ENCODE measurements at regions of chr17 and their contacts with region 1.

Region 1: GRCh38 chr17:79612468-79613194 is 1.8 kb upstream of the RBFOX3 start:
- DNase-seq: peak; percentile 92 to 94
- ATAC-seq: peak; percentile 67 to 89
- H3K4me3 ChIP-seq: no peak overlapping the region
- H3K27ac ChIP-seq: peak overlapping the region; percentile 88 to 95
- H3K4me1 ChIP-seq: peaks cover 37% of the 10 kb centered on the region
- CTCF ChIP-seq: peak; percentile 97
- EP300 ChIP-seq: no peak
- POLR2A ChIP-seq: no peak
- RAD21 ChIP-seq: peak; percentile 96 to 97

Region 2: GRCh38 chr17:79087428-79088143 is 525.0 kb before region 1 on chr17:
- CTCF ChIA-PET with region 1: interaction called, 28 read pairs
- POLR2A ChIA-PET with region 1: no interaction called
- DNase-seq: peak; percentile 68 to 96
- ATAC-seq: peak; percentile 70 to 90
- H3K4me3 ChIP-seq: no peak overlapping the region
- H3K27ac ChIP-seq: no peak overlapping the region
- H3K4me1 ChIP-seq: no peaks in the 10 kb centered on the region
- CTCF ChIP-seq: peak; percentile 95
- EP300 ChIP-seq: no peak
- POLR2A ChIP-seq: no peak
- RAD21 ChIP-seq: peak; percentile 88 to 89

Region 3: DNA sequence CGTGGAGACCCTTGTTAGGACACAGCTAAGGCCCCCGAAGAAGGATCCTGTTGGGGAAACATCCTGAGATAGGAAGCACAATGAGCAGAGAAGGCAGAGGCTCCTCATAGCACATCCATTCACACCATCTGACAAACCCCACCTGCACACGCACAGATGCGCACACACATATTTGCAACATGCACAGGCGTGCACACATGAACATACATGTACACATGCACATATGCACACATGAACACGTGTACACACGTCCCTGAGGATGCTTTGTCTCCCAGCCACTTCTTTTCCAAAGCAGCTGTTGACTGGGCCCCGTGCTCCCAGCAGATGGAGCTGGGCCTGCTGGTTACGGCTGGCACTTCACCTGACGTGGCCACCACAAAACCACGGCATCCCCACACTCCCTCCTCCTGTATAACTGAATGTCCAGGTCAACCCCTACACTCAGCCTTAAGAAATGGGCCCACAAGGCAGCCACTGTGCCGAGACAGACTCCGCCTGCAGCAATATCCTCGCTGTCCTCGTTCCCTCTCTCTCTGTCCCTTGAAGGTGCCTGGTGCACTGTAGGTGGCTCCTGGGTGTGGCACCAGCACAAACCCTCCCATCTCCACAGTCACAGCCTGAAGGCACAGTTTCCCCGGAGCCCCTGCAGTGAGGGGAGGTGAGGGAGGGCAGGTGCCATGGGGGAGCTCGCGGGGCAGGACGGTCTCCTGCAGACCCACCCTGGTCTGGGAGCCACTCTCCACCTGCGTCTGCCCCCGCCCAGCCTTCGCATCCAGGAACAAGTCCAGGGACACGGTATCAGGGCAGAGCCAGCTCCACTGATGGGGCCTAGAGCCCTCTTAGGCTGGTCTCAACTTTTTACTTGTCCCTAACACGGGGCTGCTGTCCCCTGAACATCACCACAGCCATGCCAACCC is 184.8 kb before region 1 on chr17:
- CTCF ChIA-PET with region 1: interaction called, 14 read pairs
- POLR2A ChIA-PET with region 1: no interaction called
- DNase-seq: peak in 1 of 2 experiments; percentile 44
- ATAC-seq: peak; percentile 4 to 20; a peak in 2 of 6 replicates
- H3K4me3 ChIP-seq: no peak overlapping the region
- H3K27ac ChIP-seq: peak overlapping the region; percentile 7 to 9; a peak in 3 of 6 replicates
- H3K4me1 ChIP-seq: peaks cover 35% of the 10 kb centered on the region
- CTCF ChIP-seq: no peak
- EP300 ChIP-seq: no peak
- POLR2A ChIP-seq: no peak
- RAD21 ChIP-seq: no peak

Region 4: GRCh38 chr17:79473111-79473875 is 139.3 kb before region 1 on chr17:
- CTCF ChIA-PET with region 1: interaction called, 16 read pairs
- POLR2A ChIA-PET with region 1: no interaction called
- DNase-seq: peak; percentile 99 to 100
- ATAC-seq: peak; percentile 94 to 95
- H3K4me3 ChIP-seq: no peak overlapping the region
- H3K27ac ChIP-seq: peak overlapping the region; percentile 95 to 97
- H3K4me1 ChIP-seq: peaks cover 57% of the 10 kb centered on the region
- CTCF ChIP-seq: no peak
- EP300 ChIP-seq: peak; percentile 100
- POLR2A ChIP-seq: no peak
- RAD21 ChIP-seq: peak in 1 of 2 experiments; percentile 71

Region 5: GRCh38 chr17:79543531-79543930 is 69.1 kb before region 1 on chr17:
- CTCF ChIA-PET with region 1: interaction called, 17 read pairs
- POLR2A ChIA-PET with region 1: no interaction called
- DNase-seq: no peak
- ATAC-seq: no peak
- H3K4me3 ChIP-seq: no peak overlapping the region
- H3K27ac ChIP-seq: peak overlapping the region in 1 of 2 experiments; percentile 28; a peak in 1 of 6 replicates
- H3K4me1 ChIP-seq: peaks cover 16% of the 10 kb centered on the region
- CTCF ChIP-seq: no peak
- EP300 ChIP-seq: no peak
- POLR2A ChIP-seq: no peak
- RAD21 ChIP-seq: no peak

Region 6: DNA sequence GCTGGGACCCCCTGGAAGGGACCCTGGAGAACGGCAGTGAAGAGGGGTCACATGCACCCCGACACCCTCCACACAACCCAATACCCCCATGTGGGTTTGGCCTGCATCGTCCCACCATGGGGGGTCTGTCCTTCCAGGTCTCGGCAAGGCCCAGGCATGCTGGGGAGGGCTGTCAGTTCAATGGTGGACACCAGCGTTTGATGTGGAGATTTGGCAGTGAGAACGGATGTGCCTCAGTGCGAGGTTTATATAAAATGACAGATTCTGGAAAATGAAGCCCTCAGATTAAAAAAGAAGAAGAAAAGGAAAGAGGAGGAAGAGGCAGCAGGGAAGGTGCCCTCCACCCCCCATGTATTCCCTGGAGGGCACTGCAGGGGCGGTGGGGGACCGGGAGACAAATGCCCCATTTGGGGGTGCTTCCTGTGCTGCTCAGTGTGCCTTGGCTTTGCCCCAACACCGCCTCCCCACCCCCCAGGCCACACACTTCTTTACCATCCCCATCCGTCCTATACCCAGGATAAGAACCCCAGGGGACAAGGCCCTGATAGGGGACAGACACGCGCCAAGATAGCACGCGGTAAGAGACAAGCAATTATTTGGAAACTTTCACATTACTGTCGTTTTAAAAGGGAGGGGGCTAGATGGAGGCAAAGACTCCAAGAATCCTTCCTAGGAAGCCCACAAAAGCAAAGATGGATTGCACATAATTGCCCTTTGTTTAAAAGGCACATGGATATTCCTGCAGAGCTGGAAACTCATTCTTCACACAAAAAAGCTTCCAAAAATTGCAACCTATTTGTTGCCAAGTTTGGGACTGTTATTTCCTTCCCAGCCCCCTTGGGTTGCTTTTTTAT is 22.7 kb before region 1 on chr17:
- CTCF ChIA-PET with region 1: interaction called, 26 read pairs
- POLR2A ChIA-PET with region 1: no interaction called
- DNase-seq: no peak
- ATAC-seq: no peak
- H3K4me3 ChIP-seq: no peak overlapping the region
- H3K27ac ChIP-seq: no peak overlapping the region
- H3K4me1 ChIP-seq: peaks cover 9% of the 10 kb centered on the region; the same call in 1 of the 3 replicates
- CTCF ChIP-seq: no peak
- EP300 ChIP-seq: no peak
- POLR2A ChIP-seq: no peak
- RAD21 ChIP-seq: no peak

Region 7: DNA sequence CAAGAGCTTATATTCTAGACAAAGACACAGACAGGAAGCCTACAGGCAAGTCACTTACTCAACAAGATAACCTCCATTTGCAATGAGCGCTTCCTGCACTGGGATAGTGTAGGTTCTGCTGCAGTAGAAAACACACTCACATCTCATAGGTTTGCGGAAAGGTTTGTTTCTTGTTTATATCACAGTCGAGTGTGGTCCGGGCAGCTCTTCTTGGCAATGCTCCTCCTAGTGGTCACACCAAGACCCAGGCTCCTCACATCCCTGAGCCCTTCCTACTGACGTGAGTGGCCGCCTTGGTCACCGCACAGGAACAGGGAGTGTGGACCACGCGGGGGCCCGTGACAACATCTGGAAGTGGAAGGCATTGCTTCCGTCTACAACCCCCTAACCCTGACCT is 46.2 kb after region 1 on chr17:
- CTCF ChIA-PET with region 1: interaction called, 21 read pairs
- POLR2A ChIA-PET with region 1: no interaction called
- DNase-seq: peak; percentile 70 to 76
- ATAC-seq: peak; percentile 91 to 98
- H3K4me3 ChIP-seq: no peak overlapping the region
- H3K27ac ChIP-seq: no peak overlapping the region; a peak in 1 of 6 replicates
- H3K4me1 ChIP-seq: 0 out of 3 replicates have a peak, but pooled peaks cover 4% of the 10 kb centered on the region
- CTCF ChIP-seq: peak; percentile 57
- EP300 ChIP-seq: no peak
- POLR2A ChIP-seq: no peak
- RAD21 ChIP-seq: peak; percentile 49 to 57; a peak in 4 of 5 replicates

Measured in A549 (cell line).